ENCODE measurements at regions of chr13 and their contacts with region 1.

Region 1: DNA sequence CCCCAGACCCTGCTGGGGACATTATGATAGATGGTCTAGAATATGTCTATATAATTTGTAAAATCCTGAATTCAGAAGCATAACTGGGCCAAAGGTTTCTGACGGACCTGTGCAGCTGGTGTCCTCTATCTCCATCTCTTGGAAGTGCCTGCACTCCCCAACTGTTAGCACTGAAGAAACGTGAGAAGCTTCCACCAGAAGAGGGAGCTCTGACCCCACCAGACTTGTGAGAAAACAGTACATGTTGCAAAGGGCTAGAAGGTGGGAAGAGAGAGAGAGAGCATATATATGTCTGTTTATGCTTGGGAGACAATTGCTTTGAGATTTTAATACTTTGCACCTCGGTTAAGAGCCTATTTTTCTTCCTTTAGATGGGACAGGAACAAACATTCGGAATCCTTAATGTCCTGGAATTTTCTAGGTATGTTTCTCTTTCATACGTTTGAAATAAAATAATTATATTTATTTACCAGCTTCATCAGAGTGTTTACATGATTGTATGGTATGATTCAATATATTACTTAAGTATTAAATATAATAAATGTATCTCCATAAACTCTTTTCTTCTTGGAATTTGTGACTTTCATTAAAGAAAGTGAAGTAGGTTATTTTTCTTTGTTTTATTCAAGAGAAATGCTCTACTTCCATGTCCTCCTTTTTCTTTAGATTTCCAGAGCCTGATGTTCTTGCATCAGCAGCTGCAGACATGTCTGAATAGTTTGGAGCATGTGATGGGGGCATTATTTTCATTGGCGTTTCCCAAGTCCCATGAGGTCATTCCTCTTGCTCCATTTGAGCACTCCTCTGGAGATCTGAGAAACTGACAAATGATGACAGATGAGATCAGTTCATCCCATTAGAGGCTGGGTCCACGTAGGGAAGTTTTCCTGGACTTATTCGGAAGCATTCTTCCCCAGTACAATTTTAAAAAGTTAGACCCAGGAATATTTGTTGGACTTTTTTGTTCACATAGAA is 202.9 kb downstream of the ATP8A2 start:
- DNase-seq: peak; percentile 83
- ATAC-seq: peak; percentile 75
- H3K4me3 Mint-ChIP-seq: no peak overlapping the region
- H3K27ac Mint-ChIP-seq: no peak overlapping the region
- H3K4me1 Mint-ChIP-seq: no peaks in the 10 kb centered on the region
- H3K27me3 Mint-ChIP-seq: peaks cover 30% of the 10 kb centered on the region

Region 2: DNA sequence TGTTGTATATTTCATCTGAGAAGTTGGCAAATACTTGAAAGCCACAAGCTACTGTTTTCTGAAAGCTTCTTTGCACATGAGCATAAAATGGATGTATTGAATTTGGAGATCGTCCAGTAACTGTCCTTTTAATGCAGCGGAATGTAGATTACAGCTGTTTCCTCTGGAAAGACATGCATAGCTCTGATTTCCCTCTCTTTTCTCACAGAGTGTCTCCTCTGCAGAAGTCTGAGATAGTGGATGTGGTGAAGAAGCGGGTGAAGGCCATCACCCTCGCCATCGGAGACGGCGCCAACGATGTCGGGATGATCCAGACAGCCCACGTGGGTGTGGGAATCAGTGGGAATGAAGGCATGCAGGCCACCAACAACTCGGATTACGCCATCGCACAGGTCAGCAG is 194.1 kb after region 1 on chr13:
- CTCF ChIA-PET with region 1: no interaction called
- POLR2A ChIA-PET with region 1: no interaction called
- intact Hi-C with region 1: loop called in 1 of 2 experiments (anchors 5 kb)
- DNase-seq: no peak
- ATAC-seq: no peak
- H3K4me3 Mint-ChIP-seq: no peak overlapping the region
- H3K27ac Mint-ChIP-seq: no peak overlapping the region
- H3K4me1 Mint-ChIP-seq: peaks cover 5% of the 10 kb centered on the region
- H3K27me3 Mint-ChIP-seq: peaks cover 2% of the 10 kb centered on the region

Region 3: DNA sequence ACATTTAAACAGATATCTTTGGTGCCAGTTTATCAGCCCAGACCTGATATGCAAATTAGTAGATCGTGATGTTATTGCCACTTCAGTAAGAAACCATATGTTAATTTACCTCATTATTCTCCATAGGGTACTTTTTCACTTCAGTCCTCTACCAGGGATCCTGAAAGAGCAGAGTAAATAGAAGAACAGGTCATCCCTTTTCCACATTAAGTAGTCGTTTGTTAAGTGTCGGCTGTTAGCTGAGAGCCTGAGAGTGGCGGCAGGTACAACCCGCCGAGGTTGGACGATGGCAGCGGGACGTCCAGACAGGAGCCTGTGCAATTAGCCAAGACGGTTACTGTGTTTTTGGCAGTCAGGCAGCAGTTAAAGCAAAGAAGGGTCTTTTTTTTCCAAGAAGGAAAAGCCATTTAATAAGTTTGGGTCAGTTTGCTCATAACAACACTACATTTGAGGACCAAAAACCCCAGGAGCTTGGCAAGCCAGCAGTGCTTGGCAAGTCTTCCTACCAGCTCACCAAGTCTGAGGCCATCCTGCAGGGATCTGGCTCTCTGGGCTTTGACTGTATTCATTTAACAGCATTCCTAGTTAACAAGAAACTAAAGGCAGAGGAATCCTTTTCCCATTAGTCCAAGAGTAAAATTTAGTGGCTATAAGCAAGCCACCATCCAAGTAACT is 245.3 kb after region 1 on chr13:
- CTCF ChIA-PET with region 1: no interaction called
- POLR2A ChIA-PET with region 1: no interaction called
- intact Hi-C with region 1: loop called (anchors 10 kb)
- DNase-seq: no peak
- ATAC-seq: no peak
- H3K4me3 Mint-ChIP-seq: no peak overlapping the region
- H3K27ac Mint-ChIP-seq: no peak overlapping the region
- H3K4me1 Mint-ChIP-seq: no peaks in the 10 kb centered on the region
- H3K27me3 Mint-ChIP-seq: no peaks in the 10 kb centered on the region

Region 4: DNA sequence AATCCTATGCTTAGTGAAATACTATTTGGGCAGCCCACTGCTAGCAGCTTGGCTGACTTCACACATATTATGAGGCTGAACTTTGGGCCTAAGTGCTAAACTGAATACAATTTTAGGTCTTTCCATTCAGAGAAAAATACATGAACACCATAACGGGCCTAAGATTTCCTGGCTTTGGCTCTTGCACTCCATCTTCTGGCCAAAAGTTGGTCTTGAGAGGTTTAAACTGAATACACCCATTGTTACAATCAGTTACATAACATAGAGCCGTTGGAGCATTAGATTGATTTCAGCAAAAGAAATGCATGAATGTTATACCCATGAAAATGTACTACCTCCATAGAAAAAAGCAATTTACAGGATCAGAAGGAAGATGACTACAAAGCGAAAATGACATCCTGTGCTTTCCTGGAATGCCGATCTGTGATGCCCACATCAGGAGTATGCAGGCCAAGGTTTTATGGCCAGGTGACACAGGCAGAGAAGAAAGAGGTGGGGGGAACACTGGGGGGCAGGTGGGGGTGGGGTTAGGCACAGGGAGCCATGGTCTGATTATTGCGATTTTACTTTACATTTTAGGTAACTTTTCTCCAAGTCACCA is 488.2 kb after region 1 on chr13:
- CTCF ChIA-PET with region 1: interaction called, 4 read pairs
- POLR2A ChIA-PET with region 1: no interaction called
- intact Hi-C with region 1: loop called (anchors 1 to 2 kb)
- DNase-seq: peak; percentile 40
- ATAC-seq: peak; percentile 49
- H3K4me3 Mint-ChIP-seq: no peak overlapping the region
- H3K27ac Mint-ChIP-seq: no peak overlapping the region
- H3K4me1 Mint-ChIP-seq: no peaks in the 10 kb centered on the region
- H3K27me3 Mint-ChIP-seq: peaks cover 1% of the 10 kb centered on the region

Region 5: DNA sequence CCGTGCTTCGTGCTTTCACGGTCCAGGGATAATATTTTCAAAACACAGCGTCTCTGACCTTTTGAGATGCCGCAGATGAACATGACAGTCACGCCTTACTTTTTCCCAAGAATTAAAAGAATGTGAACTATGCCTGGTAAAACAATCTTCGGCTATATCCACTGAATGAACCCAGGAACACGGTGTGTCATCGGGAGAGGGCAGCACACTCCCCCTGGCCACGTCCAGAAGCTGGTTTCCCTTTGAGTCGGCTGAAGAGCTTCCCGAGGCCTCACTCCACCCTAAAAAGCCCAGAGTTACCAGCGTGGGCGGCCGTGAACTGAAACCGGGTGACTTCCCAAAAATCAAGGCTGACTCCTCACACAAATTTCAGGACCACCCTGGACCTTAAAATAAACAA is 500.0 kb after region 1 on chr13:
- CTCF ChIA-PET with region 1: interaction called, 14 read pairs
- POLR2A ChIA-PET with region 1: interaction called, 3 read pairs
- intact Hi-C with region 1: loop called in 1 of 2 experiments (anchors 1 kb)
- DNase-seq: no peak
- ATAC-seq: no peak
- H3K4me3 Mint-ChIP-seq: no peak overlapping the region
- H3K27ac Mint-ChIP-seq: no peak overlapping the region
- H3K4me1 Mint-ChIP-seq: no peaks in the 10 kb centered on the region
- H3K27me3 Mint-ChIP-seq: peaks cover 16% of the 10 kb centered on the region